T-cell (primary cell): ENCODE measurements at regions of chr10 and their contacts with region 1.

Region 1: GRCh38 chr10:119199231-119199992 is 8.0 kb upstream of the GRK5 start:
- DNase-seq: peak in 27 of 35 experiments; percentile 15 to 71 (median 37)
- ATAC-seq: peak; percentile 73 to 95 (median 80)
- H3K4me3 ChIP-seq: no peak overlapping the region
- H3K4me3 Mint-ChIP-seq: no peak overlapping the region
- H3K27ac ChIP-seq: no peak overlapping the region
- H3K27ac Mint-ChIP-seq: no peak overlapping the region
- H3K4me1 ChIP-seq: no peaks in the 10 kb centered on the region
- H3K4me1 Mint-ChIP-seq: peaks cover 6 to 10% (median 10%) of the 10 kb centered on the region in 3 donors
- H3K27me3 ChIP-seq: no peaks in the 10 kb centered on the region
- H3K27me3 Mint-ChIP-seq: peaks cover 0 to 4% of the 10 kb centered on the region in 2 donors

Region 2: GRCh38 chr10:119233123-119233820 is 33.9 kb after region 1 on chr10:
- CTCF ChIA-PET with region 1: no interaction called
- POLR2A ChIA-PET with region 1: no interaction called
- DNase-seq: no peak
- ATAC-seq: no peak
- H3K4me3 ChIP-seq: no peak overlapping the region
- H3K4me3 Mint-ChIP-seq: no peak overlapping the region
- H3K27ac ChIP-seq: no peak overlapping the region
- H3K27ac Mint-ChIP-seq: peak overlapping the region in 1 of 2 donors; percentile 23
- H3K4me1 ChIP-seq: peaks cover 9 to 24% of the 10 kb centered on the region in 2 experiments
- H3K4me1 Mint-ChIP-seq: peaks cover 61 to 72% (median 67%) of the 10 kb centered on the region in 3 donors
- H3K27me3 ChIP-seq: no peaks in the 10 kb centered on the region
- H3K27me3 Mint-ChIP-seq: no peaks in the 10 kb centered on the region

Region 3: GRCh38 chr10:119416855-119417254 is 217.4 kb after region 1 on chr10:
- CTCF ChIA-PET with region 1: interaction called, 10 to 18 read pairs
- POLR2A ChIA-PET with region 1: interaction called in 1 of 2 experiments, 3 read pairs
- DNase-seq: peak; percentile 36 to 83 (median 63)
- ATAC-seq: peak; percentile 71 to 85 (median 83)
- H3K4me3 ChIP-seq: no peak overlapping the region
- H3K4me3 Mint-ChIP-seq: no peak overlapping the region
- H3K27ac ChIP-seq: no peak overlapping the region
- H3K27ac Mint-ChIP-seq: no peak overlapping the region
- H3K4me1 ChIP-seq: peaks cover 0 to 6% of the 10 kb centered on the region in 2 experiments
- H3K4me1 Mint-ChIP-seq: peaks cover 0 to 5% (median 2%) of the 10 kb centered on the region in 3 donors
- H3K27me3 ChIP-seq: no peaks in the 10 kb centered on the region
- H3K27me3 Mint-ChIP-seq: no peaks in the 10 kb centered on the region